HCT116 (cell line): ENCODE measurements at regions of chr11 and their contacts with region 1.

Region 1: GRCh38 chr11:69101115-69101791 is 52.5 kb downstream of the TPCN2 start:
- DNase-seq: peak; percentile 49
- ATAC-seq: peak; percentile 93
- H3K4me3 ChIP-seq: no peak overlapping the region
- H3K27ac ChIP-seq: no peak overlapping the region
- H3K4me1 ChIP-seq: peaks cover 3 to 21% of the 10 kb centered on the region in 2 experiments; a peak in 3 of 4 replicates
- H3K27me3 ChIP-seq: no peaks in the 10 kb centered on the region
- CTCF ChIP-seq: peak; percentile 95 to 99 (median 98)
- POLR2A ChIP-seq: no peak
- RAD21 ChIP-seq: peak; percentile 100

Region 2: DNA sequence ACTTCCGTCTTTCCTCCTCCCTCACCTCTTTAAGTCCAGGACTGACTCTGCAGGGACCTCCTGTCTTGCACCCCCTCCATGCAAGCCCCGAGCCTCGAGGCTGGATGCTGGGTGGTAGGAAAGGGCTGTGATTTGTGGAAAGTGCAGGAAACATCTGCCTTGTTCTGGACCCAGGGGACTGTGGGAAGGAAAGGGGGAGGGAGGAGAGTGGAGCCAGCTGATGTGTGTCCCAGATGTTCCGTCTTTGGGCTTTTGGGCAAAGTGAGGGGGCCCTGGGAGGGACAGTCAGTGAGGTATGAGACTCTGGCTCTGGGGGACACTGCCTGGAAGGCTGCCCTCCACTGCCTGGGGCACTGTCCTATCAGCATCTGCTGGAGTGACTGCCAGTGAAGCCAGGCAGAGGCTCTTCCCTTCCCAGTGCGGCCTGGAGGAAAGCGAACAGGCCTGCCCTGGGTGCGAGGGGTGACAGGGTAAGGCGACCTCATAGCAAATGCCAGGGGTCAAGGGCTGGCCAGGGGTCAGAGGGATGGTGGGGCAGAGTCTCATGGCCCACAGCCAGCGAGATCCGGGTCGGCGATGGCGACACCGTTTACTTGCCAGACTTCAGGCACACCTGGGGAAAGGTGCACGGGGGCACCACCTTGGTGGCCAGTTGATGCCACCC is 122.2 kb before region 1 on chr11:
- CTCF ChIA-PET with region 1: no interaction called
- POLR2A ChIA-PET with region 1: no interaction called
- RAD21 ChIA-PET with region 1: no interaction called
- intact Hi-C with region 1: no loop called
- DNase-seq: no peak
- ATAC-seq: no peak
- H3K4me3 ChIP-seq: no peak overlapping the region
- H3K27ac ChIP-seq: no peak overlapping the region
- H3K4me1 ChIP-seq: peaks cover 0 to 5% of the 10 kb centered on the region in 2 experiments; a peak in 1 of 4 replicates
- H3K27me3 ChIP-seq: no peaks in the 10 kb centered on the region
- CTCF ChIP-seq: no peak
- POLR2A ChIP-seq: no peak
- RAD21 ChIP-seq: no peak

Region 3: DNA sequence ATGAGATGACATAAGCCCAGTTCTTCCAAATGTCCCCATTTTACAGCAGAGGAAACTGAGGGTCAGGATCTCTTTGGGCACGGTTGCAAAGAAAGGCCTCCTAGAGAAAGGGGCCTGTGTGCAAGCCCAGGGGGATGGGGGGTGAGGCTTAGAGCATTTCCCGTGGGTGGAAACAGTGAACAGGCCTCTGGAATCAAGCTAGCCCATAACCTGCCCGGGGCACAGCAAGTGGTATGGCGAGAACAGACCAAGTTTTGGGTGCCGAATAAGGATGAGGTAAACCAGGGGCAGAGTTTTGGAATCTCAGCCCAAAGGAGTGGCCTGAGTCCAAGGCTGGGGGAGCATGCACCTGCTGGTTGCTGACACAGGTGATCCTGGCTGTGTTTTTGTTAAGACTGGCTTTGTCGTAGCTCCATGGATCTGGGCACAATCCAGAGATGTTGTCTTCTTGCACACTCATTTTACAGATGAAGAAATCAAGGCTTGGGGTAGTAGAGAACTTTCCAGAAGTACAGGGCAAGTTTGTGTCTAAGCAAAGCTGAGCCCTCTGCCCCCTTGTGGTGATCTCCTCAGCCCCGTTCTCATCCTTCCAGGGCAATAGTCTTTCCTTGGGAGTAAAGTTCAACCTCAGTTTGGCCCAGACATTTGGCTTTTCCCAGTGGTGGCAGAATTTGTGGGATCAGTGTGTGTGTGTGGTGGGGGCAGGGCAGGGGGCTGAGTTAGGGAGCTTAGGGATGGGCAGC is 139.2 kb after region 1 on chr11:
- CTCF ChIA-PET with region 1: interaction called, 5 read pairs
- POLR2A ChIA-PET with region 1: no interaction called
- RAD21 ChIA-PET with region 1: interaction called in 1 of 2 experiments, 3 read pairs
- intact Hi-C with region 1: loop called (anchors 1 kb)
- DNase-seq: peak; percentile 18
- ATAC-seq: peak; percentile 78
- H3K4me3 ChIP-seq: no peak overlapping the region
- H3K27ac ChIP-seq: no peak overlapping the region
- H3K4me1 ChIP-seq: peaks cover 0 to 8% of the 10 kb centered on the region in 2 experiments; a peak in 1 of 4 replicates
- H3K27me3 ChIP-seq: no peaks in the 10 kb centered on the region
- CTCF ChIP-seq: peak; percentile 42 to 80 (median 59); a peak in 5 of 6 replicates
- POLR2A ChIP-seq: no peak
- RAD21 ChIP-seq: peak; percentile 52

Region 4: GRCh38 chr11:69362316-69362715 is 261.1 kb after region 1 on chr11:
- CTCF ChIA-PET with region 1: no interaction called
- POLR2A ChIA-PET with region 1: no interaction called
- RAD21 ChIA-PET with region 1: no interaction called
- intact Hi-C with region 1: loop called (anchors 5 kb)
- DNase-seq: no peak
- ATAC-seq: peak; percentile 73
- H3K4me3 ChIP-seq: no peak overlapping the region
- H3K27ac ChIP-seq: no peak overlapping the region
- H3K4me1 ChIP-seq: peaks cover 5 to 42% of the 10 kb centered on the region in 2 experiments; a peak in 3 of 4 replicates
- H3K27me3 ChIP-seq: no peaks in the 10 kb centered on the region
- CTCF ChIP-seq: peak in 2 of 3 experiments; percentile 16 to 26; a peak in 3 of 6 replicates
- POLR2A ChIP-seq: no peak
- RAD21 ChIP-seq: peak; percentile 16; the same call in 1 of the 2 replicates

Region 5: DNA sequence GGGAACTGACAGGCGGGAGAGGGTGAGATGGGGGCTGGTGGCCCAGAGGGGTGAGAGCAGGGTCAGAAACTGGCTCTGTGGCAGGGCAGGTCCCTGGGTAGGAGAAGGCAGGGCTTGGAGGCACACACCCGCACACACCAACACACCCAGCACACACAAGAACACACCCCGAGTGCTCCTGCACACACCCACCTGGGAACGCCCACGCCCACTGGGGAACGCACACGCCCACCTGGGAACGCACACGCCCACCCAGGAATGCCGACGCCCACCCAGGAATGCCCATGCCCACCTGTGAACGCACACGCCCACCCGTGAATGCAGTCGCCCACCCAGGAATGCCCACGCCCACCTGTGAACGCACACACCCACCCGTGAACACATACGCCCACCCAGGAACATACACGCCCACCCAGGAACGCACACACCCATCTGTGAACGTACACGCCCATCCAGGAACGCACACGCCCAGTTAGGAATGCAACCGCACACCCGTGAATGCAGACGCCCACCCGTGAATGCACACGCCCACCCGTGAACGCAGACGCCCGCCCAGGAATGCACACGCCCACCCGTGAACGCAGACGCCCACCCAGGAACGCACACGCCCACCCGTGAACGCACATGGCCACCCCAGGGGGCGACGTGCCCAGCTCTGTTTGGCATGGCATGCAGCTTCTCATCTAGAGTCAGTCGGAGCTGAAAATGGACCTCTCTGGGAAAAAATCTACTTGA is 275.8 kb after region 1 on chr11:
- CTCF ChIA-PET with region 1: no interaction called
- POLR2A ChIA-PET with region 1: no interaction called
- RAD21 ChIA-PET with region 1: no interaction called
- intact Hi-C with region 1: loop called (anchors 5 kb)
- DNase-seq: no peak
- ATAC-seq: peak; percentile 41
- H3K4me3 ChIP-seq: no peak overlapping the region
- H3K27ac ChIP-seq: no peak overlapping the region
- H3K4me1 ChIP-seq: peaks cover 13 to 83% of the 10 kb centered on the region in 2 experiments
- H3K27me3 ChIP-seq: no peaks in the 10 kb centered on the region
- CTCF ChIP-seq: no peak
- POLR2A ChIP-seq: no peak
- RAD21 ChIP-seq: no peak

Region 6: GRCh38 chr11:69642913-69643632 is 541.8 kb after region 1 on chr11:
- CTCF ChIA-PET with region 1: interaction called, 6 read pairs
- POLR2A ChIA-PET with region 1: interaction called, 3 read pairs
- RAD21 ChIA-PET with region 1: interaction called in 1 of 2 experiments, 5 read pairs
- intact Hi-C with region 1: loop called (anchors 1 kb)
- DNase-seq: no peak
- ATAC-seq: peak; percentile 2; the same call in 1 of the 2 replicates
- H3K4me3 ChIP-seq: peak overlapping the region; percentile 96 to 99
- H3K27ac ChIP-seq: peak overlapping the region; percentile 96
- H3K4me1 ChIP-seq: peaks cover 10 to 63% of the 10 kb centered on the region in 2 experiments
- H3K27me3 ChIP-seq: no peaks in the 10 kb centered on the region
- CTCF ChIP-seq: peak in 2 of 3 experiments; percentile 76; a peak in 4 of 6 replicates
- POLR2A ChIP-seq: no peak
- RAD21 ChIP-seq: no peak

Region 7: GRCh38 chr11:69670158-69670845 is 569.0 kb after region 1 on chr11:
- CTCF ChIA-PET with region 1: interaction called, 24 read pairs
- POLR2A ChIA-PET with region 1: no interaction called
- RAD21 ChIA-PET with region 1: interaction called in 1 of 2 experiments, 4 read pairs
- intact Hi-C with region 1: loop called (anchors 1 kb)
- DNase-seq: peak; percentile 56
- ATAC-seq: peak; percentile 79
- H3K4me3 ChIP-seq: no peak overlapping the region
- H3K27ac ChIP-seq: peak overlapping the region; percentile 27; the same call in 1 of the 2 replicates
- H3K4me1 ChIP-seq: peaks cover 6 to 24% of the 10 kb centered on the region in 2 experiments; a peak in 3 of 4 replicates
- H3K27me3 ChIP-seq: no peaks in the 10 kb centered on the region
- CTCF ChIP-seq: peak; percentile 83 to 95 (median 91)
- POLR2A ChIP-seq: no peak
- RAD21 ChIP-seq: peak; percentile 91

Region 8: GRCh38 chr11:69683764-69684333 is 582.6 kb after region 1 on chr11:
- CTCF ChIA-PET with region 1: interaction called, 16 read pairs
- POLR2A ChIA-PET with region 1: no interaction called
- RAD21 ChIA-PET with region 1: interaction called, 3 to 5 read pairs
- intact Hi-C with region 1: loop called (anchors 1 kb)
- DNase-seq: no peak
- ATAC-seq: peak; percentile 78
- H3K4me3 ChIP-seq: no peak overlapping the region
- H3K27ac ChIP-seq: no peak overlapping the region
- H3K4me1 ChIP-seq: peaks cover 11 to 45% of the 10 kb centered on the region in 2 experiments; a peak in 3 of 4 replicates
- H3K27me3 ChIP-seq: no peaks in the 10 kb centered on the region
- CTCF ChIP-seq: peak; percentile 56 to 73 (median 71); a peak in 5 of 6 replicates
- POLR2A ChIP-seq: no peak
- RAD21 ChIP-seq: peak; percentile 92